CD14-positive monocyte (primary cell): ENCODE measurements at regions of chr5 and their contacts with region 1.

Region 1: GRCh38 chr5:129767906-129768380 is 20.0 kb downstream of the MINAR2 start:
- DNase-seq: peak; percentile 45 to 64 (median 52)
- H3K4me3 ChIP-seq: no peak overlapping the region
- H3K4me3 Mint-ChIP-seq: no peak overlapping the region
- H3K27ac ChIP-seq: no peak overlapping the region
- H3K27ac Mint-ChIP-seq: no peak overlapping the region
- H3K4me1 ChIP-seq: no peaks in the 10 kb centered on the region
- H3K4me1 Mint-ChIP-seq: no peaks in the 10 kb centered on the region
- H3K27me3 ChIP-seq: no peaks in the 10 kb centered on the region
- H3K27me3 Mint-ChIP-seq: peaks cover 0 to 2% (median 0%) of the 10 kb centered on the region in 3 donors
- CTCF ChIP-seq: peak; percentile 89

Region 2: DNA sequence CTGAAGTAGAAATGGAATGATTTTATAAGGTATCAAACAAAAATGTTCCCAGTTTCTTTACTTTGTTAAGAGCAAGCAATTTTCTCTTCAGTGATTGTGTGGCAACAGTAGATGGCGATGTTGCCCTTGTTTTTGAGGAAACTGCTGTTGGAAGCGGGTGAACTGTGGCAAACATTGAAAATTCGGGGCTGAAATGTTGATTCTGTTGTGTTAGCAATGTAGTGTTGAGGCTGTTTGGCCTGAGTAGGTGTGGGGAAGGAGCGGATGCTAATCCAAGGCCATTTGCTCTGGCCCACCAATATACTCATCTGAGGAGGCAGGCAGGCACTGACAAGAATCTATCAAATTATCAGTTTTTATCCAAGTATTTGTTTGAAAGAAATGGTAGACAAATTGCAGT is 1554.6 kb before region 1 on chr5:
- intact Hi-C with region 1: loop called (anchors 5 kb)
- DNase-seq: peak; percentile 9 to 40 (median 26)
- H3K4me3 ChIP-seq: no peak overlapping the region
- H3K4me3 Mint-ChIP-seq: no peak overlapping the region
- H3K27ac ChIP-seq: no peak overlapping the region
- H3K27ac Mint-ChIP-seq: no peak overlapping the region
- H3K4me1 ChIP-seq: no peaks in the 10 kb centered on the region
- H3K4me1 Mint-ChIP-seq: peaks cover 2% of the 10 kb centered on the region
- H3K27me3 ChIP-seq: no peaks in the 10 kb centered on the region
- H3K27me3 Mint-ChIP-seq: peaks cover 0 to 3% (median 2%) of the 10 kb centered on the region in 3 donors
- CTCF ChIP-seq: peak; percentile 79

Region 3: GRCh38 chr5:128904805-128905570 is 863.0 kb before region 1 on chr5:
- intact Hi-C with region 1: loop called (anchors 5 kb)
- DNase-seq: no peak
- H3K4me3 ChIP-seq: no peak overlapping the region
- H3K4me3 Mint-ChIP-seq: no peak overlapping the region
- H3K27ac ChIP-seq: no peak overlapping the region
- H3K27ac Mint-ChIP-seq: no peak overlapping the region
- H3K4me1 ChIP-seq: no peaks in the 10 kb centered on the region
- H3K4me1 Mint-ChIP-seq: no peaks in the 10 kb centered on the region
- H3K27me3 ChIP-seq: no peaks in the 10 kb centered on the region
- H3K27me3 Mint-ChIP-seq: peaks cover 0 to 2% (median 0%) of the 10 kb centered on the region in 3 donors
- CTCF ChIP-seq: no peak

Region 4: GRCh38 chr5:131109540-131110255 is 1341.8 kb after region 1 on chr5:
- intact Hi-C with region 1: loop called in 1 of 2 experiments (anchors 5 kb)
- DNase-seq: peak; percentile 18 to 50 (median 32)
- H3K4me3 ChIP-seq: no peak overlapping the region
- H3K4me3 Mint-ChIP-seq: no peak overlapping the region
- H3K27ac ChIP-seq: no peak overlapping the region
- H3K27ac Mint-ChIP-seq: no peak overlapping the region
- H3K4me1 ChIP-seq: peaks cover 21 to 27% of the 10 kb centered on the region in 2 donors
- H3K4me1 Mint-ChIP-seq: peaks cover 28% of the 10 kb centered on the region
- H3K27me3 ChIP-seq: no peaks in the 10 kb centered on the region
- H3K27me3 Mint-ChIP-seq: no peaks in the 10 kb centered on the region
- CTCF ChIP-seq: peak; percentile 80

Region 5: DNA sequence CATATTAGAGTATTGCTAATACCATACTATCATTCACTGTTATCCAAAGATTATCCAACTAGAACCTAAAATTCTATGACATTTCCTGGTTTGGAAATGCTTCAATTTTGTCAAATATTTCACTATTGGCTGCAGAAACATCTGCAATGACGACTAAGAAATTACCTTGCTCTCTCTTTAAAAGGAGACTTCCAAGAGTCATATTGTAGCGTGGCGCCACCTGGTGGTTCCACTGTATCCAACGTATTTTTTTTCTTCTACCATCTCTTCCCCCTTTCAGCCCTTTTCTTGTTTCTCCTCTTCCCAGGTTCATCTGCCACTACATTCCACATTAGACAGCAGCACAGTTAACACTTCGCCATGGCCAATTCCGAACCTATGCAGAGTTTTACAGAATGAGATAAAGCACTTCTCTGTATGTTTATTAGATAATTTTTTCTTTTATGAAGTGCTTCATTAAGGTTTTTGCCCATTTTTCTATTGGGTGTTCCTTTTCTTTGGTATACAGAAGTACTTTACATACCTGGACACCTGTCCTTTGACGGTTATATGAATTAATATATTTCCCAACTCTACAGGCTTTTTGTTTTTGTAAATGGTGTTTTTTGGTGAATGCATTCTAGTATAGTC is 1649.4 kb after region 1 on chr5:
- intact Hi-C with region 1: loop called in 1 of 2 experiments (anchors 10 kb)
- DNase-seq: peak; percentile 47 to 68 (median 60)
- H3K4me3 ChIP-seq: no peak overlapping the region
- H3K4me3 Mint-ChIP-seq: no peak overlapping the region
- H3K27ac ChIP-seq: no peak overlapping the region
- H3K27ac Mint-ChIP-seq: peak overlapping the region in 2 of 7 donors; percentile 12 to 47
- H3K4me1 ChIP-seq: no peaks in the 10 kb centered on the region
- H3K4me1 Mint-ChIP-seq: peaks cover 12% of the 10 kb centered on the region
- H3K27me3 ChIP-seq: no peaks in the 10 kb centered on the region
- H3K27me3 Mint-ChIP-seq: no peaks in the 10 kb centered on the region
- CTCF ChIP-seq: peak; percentile 91